Left lung (tissue), 14 donors: ENCODE measurements at regions of chr1 and their contacts with region 1.

Region 1: DNA sequence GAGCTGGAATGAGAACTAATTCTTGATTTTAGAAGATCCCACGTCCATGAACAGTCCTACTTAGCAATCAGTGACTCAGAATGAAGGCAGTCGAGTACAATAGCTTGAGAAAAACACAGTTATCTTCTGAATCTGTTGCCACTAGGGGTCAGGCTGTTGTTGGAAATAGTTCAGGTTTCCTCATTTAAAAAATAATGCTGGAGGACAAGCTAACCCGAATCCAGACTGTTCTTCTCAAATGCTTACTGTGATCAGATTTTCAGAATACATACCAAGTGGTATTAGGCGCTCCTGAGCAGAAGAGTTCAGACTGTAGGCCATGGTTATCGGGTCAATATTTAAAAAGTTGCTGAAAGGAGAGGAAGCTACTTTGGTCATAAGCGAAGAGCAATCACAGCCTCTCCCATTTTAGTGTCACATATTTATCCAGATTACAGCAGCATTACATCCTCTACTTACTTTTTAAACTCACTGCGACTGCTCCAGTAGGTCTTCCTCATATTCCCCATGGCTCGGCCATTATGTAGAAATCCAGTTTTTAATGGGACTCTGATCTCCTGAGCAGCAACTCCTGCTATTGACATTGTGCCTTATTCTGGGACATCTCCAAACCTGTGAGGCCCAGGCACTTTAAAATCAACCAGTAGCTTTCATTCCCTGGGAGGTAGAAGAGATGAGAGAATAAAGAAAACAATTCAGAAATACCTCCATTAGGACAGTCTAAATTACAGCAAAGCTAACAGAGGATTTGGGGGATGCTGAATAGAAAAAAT is 10.9 kb downstream of the ERRFI1 start:
- DNase-seq: peak in 2 of 4 donors; percentile 74 to 79
- ATAC-seq: peak; percentile 68
- H3K4me3 ChIP-seq: no peak overlapping the region
- H3K27ac ChIP-seq: peak overlapping the region; percentile 4 to 74
- H3K4me1 ChIP-seq: peaks cover 37 to 54% of the 10 kb centered on the region in 2 donors
- H3K27me3 ChIP-seq: no peaks in the 10 kb centered on the region
- CTCF ChIP-seq: peak; percentile 53 to 65

Region 2: DNA sequence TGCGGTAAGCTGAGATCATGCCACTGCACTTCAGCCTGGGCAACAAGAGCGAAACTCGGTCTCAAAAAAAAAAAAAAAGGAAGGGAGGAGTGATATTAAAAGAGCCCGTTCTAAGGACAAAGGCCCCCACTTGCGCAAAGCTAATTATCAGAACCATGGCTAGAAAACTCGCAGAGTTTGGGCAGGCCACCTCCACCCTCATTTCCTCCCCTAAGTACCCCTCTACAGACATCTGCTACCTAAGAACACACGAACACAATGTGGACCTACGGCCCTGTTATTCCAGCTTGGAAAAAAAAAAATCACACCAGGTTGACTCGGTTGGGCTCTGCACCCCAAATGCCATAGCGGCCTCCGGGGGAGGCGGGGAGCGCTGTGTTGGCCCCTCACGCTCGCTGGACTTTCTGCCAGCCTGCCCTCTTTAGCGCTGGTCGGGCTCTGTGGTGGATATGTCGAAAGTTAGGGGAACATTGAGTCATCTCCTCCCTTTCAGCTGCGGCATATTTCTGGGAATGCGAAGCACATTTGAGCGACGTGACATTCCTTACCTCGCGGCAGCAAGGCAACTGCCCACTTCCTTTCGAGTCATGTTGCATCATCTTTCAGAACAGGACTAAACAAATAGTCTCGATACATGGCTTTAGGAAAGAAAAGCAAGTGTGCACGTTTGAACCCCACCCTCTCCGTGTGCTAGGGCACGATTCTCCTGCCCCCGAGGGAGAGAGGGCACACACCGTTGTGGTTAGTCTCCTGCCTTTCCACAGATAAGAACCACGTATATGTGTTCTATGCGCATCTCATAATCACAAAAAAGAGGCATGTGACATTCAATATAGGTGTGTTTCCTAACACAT is 196.6 kb after region 1 on chr1:
- intact Hi-C with region 1: no loop called
- DNase-seq: peak in 3 of 4 donors; percentile 75 to 85 (median 82)
- ATAC-seq: peak; percentile 85
- H3K4me3 ChIP-seq: peak overlapping the region in 1 of 2 donors; percentile 20
- H3K27ac ChIP-seq: peak overlapping the region; percentile 88 to 93
- H3K4me1 ChIP-seq: peaks cover 9 to 53% of the 10 kb centered on the region in 2 donors
- H3K27me3 ChIP-seq: no peaks in the 10 kb centered on the region
- CTCF ChIP-seq: no peak

Region 3: DNA sequence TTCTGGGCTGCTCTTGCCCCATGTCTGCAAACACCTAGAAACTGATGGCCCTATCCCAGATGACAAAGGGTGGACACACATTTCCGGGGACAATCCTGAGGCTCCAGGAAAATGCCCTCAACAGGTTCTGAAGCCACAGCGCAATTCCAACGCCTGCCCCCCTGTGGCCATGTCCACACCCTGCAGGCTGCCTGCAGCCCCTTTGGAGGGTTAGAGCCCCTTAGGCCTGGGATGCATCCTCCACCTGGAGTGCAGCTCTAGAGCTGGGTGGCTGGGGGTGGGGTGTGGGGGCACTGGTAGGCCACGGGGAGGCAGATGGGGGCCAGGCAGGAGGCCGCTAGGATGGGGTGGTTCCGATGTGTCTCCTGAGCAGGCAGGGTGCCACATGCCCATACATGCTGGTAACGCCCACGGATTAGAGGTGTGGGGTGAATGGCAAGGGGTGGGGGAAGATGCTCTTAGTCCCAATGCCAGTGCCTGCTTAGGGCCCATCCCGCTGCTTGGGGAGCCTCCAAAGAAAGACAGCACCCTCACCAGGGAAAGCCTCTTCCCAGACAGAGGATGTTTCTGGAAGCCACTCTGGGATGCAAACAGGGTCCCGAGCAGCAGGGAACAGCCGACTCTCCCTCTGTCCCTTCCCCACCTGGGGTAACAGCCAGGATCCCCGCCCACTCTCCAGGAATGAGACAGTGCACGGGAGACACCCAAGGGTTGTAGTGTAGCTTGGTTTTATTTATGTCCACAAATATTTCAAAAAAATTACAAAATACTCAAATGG is 336.7 kb after region 1 on chr1:
- intact Hi-C with region 1: loop called in 1 of 2 experiments (anchors 10 kb)
- DNase-seq: no peak
- ATAC-seq: peak; percentile 12
- H3K4me3 ChIP-seq: no peak overlapping the region
- H3K27ac ChIP-seq: peak overlapping the region in 1 of 2 donors; percentile 53
- H3K4me1 ChIP-seq: peaks cover 3 to 9% of the 10 kb centered on the region in 2 donors
- H3K27me3 ChIP-seq: no peaks in the 10 kb centered on the region
- CTCF ChIP-seq: peak; percentile 44 to 60